ENCODE measurements at regions of chr5 and their contacts with region 1.

Region 1: DNA sequence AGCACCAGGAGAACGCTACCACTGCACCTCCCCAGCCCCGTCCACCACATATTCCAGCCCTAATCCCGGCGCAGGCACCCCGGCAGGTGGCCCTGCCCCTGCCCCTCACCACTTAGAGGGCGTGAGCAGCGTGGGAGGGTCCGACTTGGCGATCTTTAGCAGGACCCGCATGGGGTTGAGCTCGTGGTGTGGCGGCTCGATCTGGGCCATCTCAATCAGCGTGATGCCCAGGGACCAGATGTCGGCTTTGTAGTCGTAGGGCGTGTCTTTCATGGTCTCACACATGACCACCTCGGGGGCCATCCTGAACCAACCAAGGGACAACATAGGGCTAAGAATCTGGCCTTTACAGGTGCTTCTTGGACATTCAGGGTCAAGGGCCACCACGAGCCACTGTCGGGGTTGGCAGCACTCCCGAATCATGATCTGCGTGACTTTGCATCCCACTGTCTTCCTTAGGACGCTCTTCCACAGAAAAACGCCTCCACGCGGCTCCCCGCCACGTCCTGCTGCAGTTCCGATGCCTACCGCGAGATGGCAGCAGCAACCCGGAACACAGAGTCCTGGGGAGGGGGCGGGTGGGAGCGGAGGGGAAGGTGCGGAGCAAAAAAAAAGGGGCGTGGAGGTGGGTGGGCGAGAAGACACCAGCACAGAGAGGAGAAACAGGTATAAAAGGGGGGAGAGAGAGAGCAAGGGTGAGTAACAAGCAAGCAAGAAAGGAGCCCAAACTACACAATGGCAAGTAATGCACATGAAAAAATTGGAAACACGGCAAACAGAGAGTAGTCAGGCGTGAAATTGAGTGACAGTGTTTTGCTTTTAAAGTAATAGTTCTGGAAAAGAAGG is 81.3 kb downstream of the STK10 start:
- DNase-seq: peak; percentile 81
- ATAC-seq: peak; percentile 54

Region 2: GRCh38 chr5:171989276-171989675 is 117.5 kb before region 1 on chr5:
- intact Hi-C with region 1: no loop called
- DNase-seq: no peak
- ATAC-seq: no peak

Region 3: GRCh38 chr5:172133359-172134029 is 26.8 kb after region 1 on chr5:
- intact Hi-C with region 1: no loop called
- DNase-seq: no peak
- ATAC-seq: peak; percentile 66

Region 4: GRCh38 chr5:172266676-172267092 is 159.9 kb after region 1 on chr5:
- intact Hi-C with region 1: no loop called
- DNase-seq: no peak
- ATAC-seq: peak; percentile 80

Region 5: DNA sequence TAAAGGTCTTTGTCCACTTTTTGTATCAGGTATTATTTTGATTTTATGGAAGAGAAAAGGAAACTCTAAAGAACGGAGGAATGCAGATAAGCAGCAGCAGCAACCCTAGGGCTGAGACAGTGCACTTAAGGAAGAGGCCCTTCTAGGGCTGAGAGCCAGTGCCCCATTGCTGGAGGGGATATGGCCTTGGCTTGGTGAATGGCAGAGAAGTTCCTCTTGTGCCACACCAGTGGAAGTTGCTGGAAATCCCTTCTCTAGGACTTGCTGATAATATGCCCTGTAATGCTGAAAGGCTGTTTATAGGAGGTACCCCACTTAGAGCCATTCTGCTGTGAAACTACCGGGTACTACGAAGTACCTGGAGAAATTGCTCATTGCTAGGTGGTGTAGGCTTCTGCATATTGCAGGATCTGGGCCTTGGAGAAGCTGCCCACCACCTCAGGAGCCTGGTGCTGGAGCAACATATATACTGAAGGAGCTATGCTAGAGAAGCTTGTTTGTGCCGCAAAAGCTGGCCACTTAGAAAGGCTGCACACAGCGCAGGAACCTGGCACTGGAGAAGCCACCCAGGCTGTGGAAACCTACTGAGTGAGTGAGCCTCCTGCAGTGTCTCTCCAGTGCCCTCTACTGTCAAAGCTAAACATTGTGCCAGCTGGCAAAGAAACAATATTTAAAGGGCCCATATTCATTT is 186.5 kb after region 1 on chr5:
- intact Hi-C with region 1: loop called (anchors 2 kb)
- DNase-seq: peak; percentile 66
- ATAC-seq: peak; percentile 99